WTC11 (cell line): ENCODE measurements at regions of chr9 and their contacts with region 1.

Region 1: GRCh38 chr9:129131300-129132145 is 20.3 kb downstream of the PTPA start:
- DNase-seq: peak; percentile 91
- ATAC-seq: peak; percentile 82
- H3K4me3 Mint-ChIP-seq: no peak overlapping the region
- H3K27ac Mint-ChIP-seq: no peak overlapping the region
- H3K4me1 Mint-ChIP-seq: peaks cover 21% of the 10 kb centered on the region
- H3K27me3 Mint-ChIP-seq: no peaks in the 10 kb centered on the region
- CTCF ChIP-seq: peak; percentile 98

Region 2: GRCh38 chr9:129097671-129098295 is 33.7 kb before region 1 on chr9:
- CTCF ChIA-PET with region 1: interaction called, 18 read pairs
- POLR2A ChIA-PET with region 1: no interaction called
- DNase-seq: no peak
- ATAC-seq: no peak
- H3K4me3 Mint-ChIP-seq: no peak overlapping the region
- H3K27ac Mint-ChIP-seq: no peak overlapping the region
- H3K4me1 Mint-ChIP-seq: peaks cover 6% of the 10 kb centered on the region
- H3K27me3 Mint-ChIP-seq: peaks cover 15% of the 10 kb centered on the region
- CTCF ChIP-seq: no peak

Region 3: GRCh38 chr9:129145822-129146292 is 14.3 kb after region 1 on chr9:
- CTCF ChIA-PET with region 1: interaction called, 142 read pairs
- POLR2A ChIA-PET with region 1: interaction called, 10 read pairs
- DNase-seq: peak; percentile 60
- ATAC-seq: peak; percentile 57
- H3K4me3 Mint-ChIP-seq: no peak overlapping the region
- H3K27ac Mint-ChIP-seq: peak overlapping the region; percentile 87
- H3K4me1 Mint-ChIP-seq: peaks cover 54% of the 10 kb centered on the region
- H3K27me3 Mint-ChIP-seq: no peaks in the 10 kb centered on the region
- CTCF ChIP-seq: no peak

Region 4: DNA sequence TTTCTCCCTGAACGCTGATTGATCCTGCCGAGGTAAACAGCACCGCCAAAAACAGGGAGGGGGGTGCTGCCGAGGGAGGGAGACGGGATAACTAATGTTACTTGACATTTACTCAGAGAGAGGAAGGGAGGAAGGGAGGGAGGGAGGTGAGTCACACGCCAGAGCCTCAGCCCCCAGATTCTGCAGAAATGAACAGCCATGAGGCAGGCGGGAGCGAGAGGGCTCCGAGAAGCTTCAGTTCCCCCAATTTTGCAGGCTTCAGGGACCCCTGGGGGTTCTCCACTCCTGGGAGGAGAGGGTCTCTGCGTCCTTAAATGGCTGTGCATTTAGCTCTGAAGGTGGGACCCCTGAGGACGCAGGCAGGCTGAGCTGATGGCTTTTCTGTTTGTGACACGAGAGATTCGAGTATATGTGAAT is 105.7 kb after region 1 on chr9:
- CTCF ChIA-PET with region 1: interaction called, 11 read pairs
- POLR2A ChIA-PET with region 1: no interaction called
- DNase-seq: no peak
- ATAC-seq: peak; percentile 40; the same call in 1 of the 2 replicates
- H3K4me3 Mint-ChIP-seq: no peak overlapping the region
- H3K27ac Mint-ChIP-seq: no peak overlapping the region
- H3K4me1 Mint-ChIP-seq: peaks cover 20% of the 10 kb centered on the region
- H3K27me3 Mint-ChIP-seq: no peaks in the 10 kb centered on the region
- CTCF ChIP-seq: no peak

Region 5: DNA sequence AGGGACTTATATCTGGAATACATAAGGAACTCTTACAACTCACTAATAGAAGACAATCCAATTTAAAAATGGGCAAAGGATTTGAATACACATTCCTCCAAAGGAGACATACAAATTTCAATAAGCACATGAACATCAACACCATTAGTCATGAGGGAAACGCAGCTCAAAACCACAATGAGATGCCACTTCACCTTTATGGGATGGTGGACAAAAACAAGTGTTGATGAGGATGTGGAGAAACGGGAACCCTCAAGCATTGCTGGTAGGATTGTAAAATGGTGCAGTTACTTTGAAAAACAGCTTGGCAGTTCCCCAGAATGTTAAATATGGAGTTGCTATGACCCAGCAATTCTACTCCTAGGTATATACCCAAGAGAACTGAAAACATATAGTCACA is 119.3 kb after region 1 on chr9:
- CTCF ChIA-PET with region 1: no interaction called
- POLR2A ChIA-PET with region 1: no interaction called
- DNase-seq: no peak
- ATAC-seq: no peak
- H3K4me3 Mint-ChIP-seq: no peak overlapping the region
- H3K27ac Mint-ChIP-seq: no peak overlapping the region
- H3K4me1 Mint-ChIP-seq: peaks cover 18% of the 10 kb centered on the region
- H3K27me3 Mint-ChIP-seq: peaks cover 6% of the 10 kb centered on the region
- CTCF ChIP-seq: no peak

Region 6: GRCh38 chr9:129333953-129334724 is 202.6 kb after region 1 on chr9:
- CTCF ChIA-PET with region 1: interaction called, 17 read pairs
- POLR2A ChIA-PET with region 1: interaction called, 3 read pairs
- DNase-seq: peak; percentile 91
- ATAC-seq: peak; percentile 82
- H3K4me3 Mint-ChIP-seq: peak overlapping the region; percentile 57
- H3K27ac Mint-ChIP-seq: peak overlapping the region; percentile 100
- H3K4me1 Mint-ChIP-seq: peaks cover 43% of the 10 kb centered on the region
- H3K27me3 Mint-ChIP-seq: 0 out of 2 replicates have a peak, but pooled peaks cover 4% of the 10 kb centered on the region
- CTCF ChIP-seq: no peak

Region 7: GRCh38 chr9:129428864-129429590 is 297.5 kb after region 1 on chr9:
- CTCF ChIA-PET with region 1: no interaction called
- POLR2A ChIA-PET with region 1: no interaction called
- DNase-seq: no peak
- ATAC-seq: no peak
- H3K4me3 Mint-ChIP-seq: no peak overlapping the region
- H3K27ac Mint-ChIP-seq: no peak overlapping the region
- H3K4me1 Mint-ChIP-seq: peaks cover 21% of the 10 kb centered on the region
- H3K27me3 Mint-ChIP-seq: peaks cover 30% of the 10 kb centered on the region
- CTCF ChIP-seq: no peak

Region 8: GRCh38 chr9:129495534-129496325 is 364.2 kb after region 1 on chr9:
- CTCF ChIA-PET with region 1: interaction called, 18 read pairs
- POLR2A ChIA-PET with region 1: interaction called, 5 read pairs
- DNase-seq: peak; percentile 97
- ATAC-seq: peak; percentile 77
- H3K4me3 Mint-ChIP-seq: peak overlapping the region; percentile 89
- H3K27ac Mint-ChIP-seq: peak overlapping the region; percentile 74; the same call in 1 of the 2 replicates
- H3K4me1 Mint-ChIP-seq: peaks cover 58% of the 10 kb centered on the region
- H3K27me3 Mint-ChIP-seq: peaks cover 61% of the 10 kb centered on the region
- CTCF ChIP-seq: no peak

Region 9: GRCh38 chr9:129626079-129626624 is 494.6 kb after region 1 on chr9 and contains the start of gene NTMT1:
- CTCF ChIA-PET with region 1: interaction called, 62 read pairs
- POLR2A ChIA-PET with region 1: no interaction called
- DNase-seq: peak; percentile 84
- ATAC-seq: peak; percentile 49
- H3K4me3 Mint-ChIP-seq: peak within 1 kb of the TSS; percentile 85
- H3K27ac Mint-ChIP-seq: peak within 1 kb of the TSS; percentile 65
- H3K4me1 Mint-ChIP-seq: peaks cover 50% of the 10 kb centered on the region
- H3K27me3 Mint-ChIP-seq: peaks cover 18% of the 10 kb centered on the region
- CTCF ChIP-seq: no peak
- total RNA-seq, gene NTMT1: 55.4 to 71.1 TPM (median 58.1 TPM) in 3 replicates